ENCODE measurements at regions of chr15 and their contacts with region 1.

Region 1: GRCh38 chr15:99059010-99059981 is 45.6 kb upstream of the SYNM start:
- DNase-seq: peak; percentile 75 to 85
- ATAC-seq: peak; percentile 74 to 96 (median 87)
- H3K4me3 ChIP-seq: peak overlapping the region; percentile 30 to 65 (median 58)
- H3K27ac ChIP-seq: peak overlapping the region; percentile 43 to 91 (median 80)
- H3K4me1 ChIP-seq: peaks cover 5 to 30% (median 19%) of the 10 kb centered on the region in 9 donors
- H3K27me3 ChIP-seq: peaks cover 0 to 35% (median 0%) of the 10 kb centered on the region in 7 donors
- CTCF ChIP-seq: peak; percentile 62 to 84 (median 81)

Region 2: GRCh38 chr15:98518823-98519561 is 540.3 kb before region 1 on chr15:
- intact Hi-C with region 1: loop called in 2 of 10 experiments (anchors 5 kb)
- DNase-seq: peak in 1 of 2 donors; percentile 59
- ATAC-seq: peak; percentile 77 to 88 (median 82)
- H3K4me3 ChIP-seq: no peak overlapping the region
- H3K27ac ChIP-seq: no peak overlapping the region
- H3K4me1 ChIP-seq: peaks cover 0 to 6% (median 0%) of the 10 kb centered on the region in 9 donors
- H3K27me3 ChIP-seq: peaks cover 0 to 11% (median 0%) of the 10 kb centered on the region in 7 donors
- CTCF ChIP-seq: peak; percentile 76 to 89 (median 79)

Region 3: GRCh38 chr15:98838397-98839259 is 220.7 kb before region 1 on chr15:
- intact Hi-C with region 1: no loop called
- DNase-seq: no peak
- ATAC-seq: no peak
- H3K4me3 ChIP-seq: no peak overlapping the region
- H3K27ac ChIP-seq: no peak overlapping the region
- H3K4me1 ChIP-seq: peaks cover 0 to 49% (median 22%) of the 10 kb centered on the region in 9 donors
- H3K27me3 ChIP-seq: no peaks in the 10 kb centered on the region
- CTCF ChIP-seq: no peak

Region 4: GRCh38 chr15:98853161-98853560 is 206.1 kb before region 1 on chr15:
- intact Hi-C with region 1: loop called in 2 of 10 experiments (anchors 5 kb)
- DNase-seq: peak; percentile 89 to 90
- ATAC-seq: peak; percentile 80 to 96 (median 88)
- H3K4me3 ChIP-seq: peak overlapping the region; percentile 30 to 80 (median 64)
- H3K27ac ChIP-seq: peak overlapping the region; percentile 56 to 90 (median 86)
- H3K4me1 ChIP-seq: peaks cover 23 to 85% (median 58%) of the 10 kb centered on the region in 9 donors
- H3K27me3 ChIP-seq: no peaks in the 10 kb centered on the region
- CTCF ChIP-seq: peak in 1 of 9 donors; percentile 21

Region 5: DNA sequence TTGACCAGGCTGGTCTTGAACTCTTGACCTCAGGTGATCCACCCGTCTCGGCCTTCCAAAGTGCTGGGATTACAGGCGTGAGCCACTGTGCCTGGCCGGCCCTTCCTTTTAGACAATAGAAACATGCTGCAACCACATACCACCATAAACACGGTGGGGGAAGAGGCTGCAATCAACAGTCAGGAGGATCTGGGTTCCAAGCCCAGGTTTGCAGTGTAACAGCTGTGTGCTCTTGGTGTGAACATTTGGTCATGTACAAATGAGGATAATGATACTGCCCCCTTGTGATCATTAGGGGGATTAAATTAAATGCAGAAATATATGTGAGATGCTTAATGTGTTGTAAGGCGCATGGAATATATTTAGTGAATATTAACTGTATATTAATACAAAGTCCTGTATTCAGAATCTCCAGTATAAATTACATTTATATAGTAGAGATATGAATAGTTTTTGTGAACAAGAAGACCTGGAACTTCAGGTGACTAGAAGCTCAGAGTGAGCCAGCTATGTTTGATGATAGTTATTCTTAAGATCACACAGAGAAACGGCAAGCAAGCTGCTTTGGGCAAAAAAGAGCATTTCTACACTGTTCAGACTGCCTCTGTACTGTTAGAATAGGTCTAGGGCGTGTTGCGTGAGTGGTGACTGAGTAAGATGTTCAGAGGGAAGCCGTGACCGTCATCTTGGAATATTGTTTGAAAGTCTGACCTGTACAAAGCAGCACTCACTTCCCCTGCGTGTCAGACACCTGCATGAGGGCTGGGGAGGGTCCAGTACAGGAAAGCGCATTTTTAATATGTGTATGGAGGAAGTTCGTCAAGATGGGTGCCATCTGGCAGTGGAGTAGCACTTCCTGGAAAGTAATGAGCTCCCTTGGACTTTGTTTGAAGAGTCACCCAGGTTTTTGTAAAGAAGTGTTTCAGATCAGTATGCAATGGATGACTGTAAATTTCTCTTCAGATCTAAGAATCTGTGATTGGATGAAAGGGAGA is 177.5 kb before region 1 on chr15:
- intact Hi-C with region 1: loop called in 2 of 10 experiments (anchors 5 kb)
- DNase-seq: no peak
- ATAC-seq: peak in 3 of 8 donors; percentile 35 to 54 (median 41)
- H3K4me3 ChIP-seq: no peak overlapping the region
- H3K27ac ChIP-seq: no peak overlapping the region
- H3K4me1 ChIP-seq: peaks cover 8 to 81% (median 56%) of the 10 kb centered on the region in 9 donors
- H3K27me3 ChIP-seq: no peaks in the 10 kb centered on the region
- CTCF ChIP-seq: peak; percentile 30 to 75 (median 63)

Region 6: GRCh38 chr15:98954411-98954810 is 104.9 kb before region 1 on chr15:
- intact Hi-C with region 1: loop called in 4 of 10 experiments (anchors 5 to 10 kb)
- DNase-seq: peak; percentile 69 to 85
- ATAC-seq: peak; percentile 72 to 92 (median 82)
- H3K4me3 ChIP-seq: no peak overlapping the region
- H3K27ac ChIP-seq: peak overlapping the region; percentile 22 to 84 (median 74)
- H3K4me1 ChIP-seq: peaks cover 16 to 60% (median 33%) of the 10 kb centered on the region in 9 donors
- H3K27me3 ChIP-seq: no peaks in the 10 kb centered on the region
- CTCF ChIP-seq: no peak